ENCODE measurements at regions of chr5 and their contacts with region 1.

Region 1: DNA sequence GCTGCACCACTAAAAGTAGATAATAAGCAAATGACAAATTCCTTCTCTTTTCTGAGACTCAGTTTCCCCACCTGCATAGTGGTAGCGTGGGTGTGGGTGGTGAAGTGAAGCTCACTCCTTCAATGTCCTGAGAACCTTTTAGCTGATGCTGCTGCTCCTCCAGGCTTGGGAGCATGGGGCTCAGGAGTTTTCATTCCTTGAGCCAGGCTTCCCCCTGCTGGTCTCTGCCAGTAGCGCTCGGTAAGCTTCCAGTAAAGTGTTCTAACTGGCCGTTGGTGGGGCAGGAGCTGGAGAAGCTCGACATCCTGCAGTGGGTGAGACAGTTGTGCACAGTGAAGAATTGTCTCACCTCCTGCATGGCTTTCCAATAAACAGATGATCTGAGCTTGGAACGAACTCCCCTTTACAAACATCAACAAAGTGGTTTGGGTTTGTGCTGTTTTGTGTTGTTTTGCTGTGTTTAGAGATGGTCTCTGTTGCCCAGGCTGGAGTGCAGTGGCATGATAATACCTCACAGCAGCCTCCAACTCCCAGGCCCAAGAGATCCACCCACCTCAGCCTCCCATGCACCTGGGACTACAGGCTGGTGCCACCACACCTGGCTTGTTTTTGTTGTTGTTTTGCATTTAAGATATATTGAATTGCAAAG is 34.6 kb downstream of the SPARC start:
- DNase-seq: peak; percentile 64
- ATAC-seq: peak; percentile 99
- H3K4me3 ChIP-seq: no peak overlapping the region
- H3K27ac ChIP-seq: no peak overlapping the region
- H3K4me1 ChIP-seq: no peaks in the 10 kb centered on the region; a peak in 1 of 4 replicates
- H3K27me3 ChIP-seq: no peaks in the 10 kb centered on the region
- CTCF ChIP-seq: peak; percentile 89 to 94 (median 93)
- POLR2A ChIP-seq: no peak
- RAD21 ChIP-seq: peak; percentile 98

Region 2: GRCh38 chr5:151126199-151126645 is 525.9 kb before region 1 on chr5:
- CTCF ChIA-PET with region 1: interaction called, 21 read pairs
- POLR2A ChIA-PET with region 1: no interaction called
- RAD21 ChIA-PET with region 1: interaction called in 1 of 2 experiments, 4 read pairs
- intact Hi-C with region 1: loop called (anchors 2 kb)
- DNase-seq: peak; percentile 38
- ATAC-seq: peak; percentile 88
- H3K4me3 ChIP-seq: no peak overlapping the region
- H3K27ac ChIP-seq: no peak overlapping the region
- H3K4me1 ChIP-seq: peaks cover 0 to 18% of the 10 kb centered on the region in 2 experiments; a peak in 2 of 4 replicates
- H3K27me3 ChIP-seq: no peaks in the 10 kb centered on the region
- CTCF ChIP-seq: peak; percentile 72 to 90 (median 84)
- POLR2A ChIP-seq: no peak
- RAD21 ChIP-seq: peak; percentile 88

Region 3: DNA sequence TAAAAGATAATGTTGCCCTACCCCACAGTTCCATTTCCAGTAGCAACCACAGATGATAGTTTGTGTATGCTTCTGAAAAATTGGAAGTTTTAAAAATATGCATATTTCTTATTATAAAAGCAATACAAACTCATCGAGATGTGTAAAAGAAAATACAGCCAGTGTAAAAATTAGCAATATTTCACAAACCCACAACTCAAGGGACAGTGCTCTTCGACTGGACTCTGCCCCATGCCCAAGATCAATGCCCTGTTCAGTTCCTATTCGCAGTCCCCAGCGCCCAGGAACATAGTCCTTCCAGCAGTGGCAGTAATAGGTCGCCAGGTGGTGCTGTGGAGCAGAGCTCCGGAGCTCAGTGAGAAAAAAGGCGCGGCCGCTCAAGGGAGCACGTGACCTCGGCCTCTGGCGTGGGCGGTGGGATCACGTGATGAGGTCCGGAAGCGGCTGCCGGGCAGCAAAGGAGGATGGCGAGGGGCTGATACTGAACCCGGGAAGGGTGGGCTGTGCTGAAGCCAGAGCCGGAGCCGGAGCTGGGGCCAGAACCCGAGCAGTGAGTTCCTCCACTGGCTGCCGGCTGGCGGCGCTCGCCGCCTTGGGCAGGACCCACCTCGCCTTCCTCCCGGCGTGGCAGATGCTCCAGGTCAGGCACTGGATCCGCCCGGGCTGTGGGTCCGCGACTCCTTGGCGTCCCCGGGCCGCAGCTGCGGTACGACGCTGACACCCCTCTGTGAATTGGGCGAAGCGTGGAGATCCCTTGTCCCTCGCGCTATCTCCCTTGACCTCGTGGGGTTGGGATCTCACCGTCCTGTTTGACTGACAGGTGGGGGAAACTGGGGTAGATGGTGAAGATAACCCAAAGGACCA is 204.7 kb before region 1 on chr5 and contains the start of gene SLC36A1:
- CTCF ChIA-PET with region 1: interaction called, 42 read pairs
- POLR2A ChIA-PET with region 1: interaction called, 4 read pairs
- RAD21 ChIA-PET with region 1: interaction called, 6 read pairs
- intact Hi-C with region 1: loop called (anchors 1 kb)
- DNase-seq: peak; percentile 80
- ATAC-seq: peak; percentile 92
- H3K4me3 ChIP-seq: peak within 1 kb of the TSS; percentile 73 to 77
- H3K27ac ChIP-seq: peak within 1 kb of the TSS; percentile 40
- H3K4me1 ChIP-seq: peaks cover 5 to 24% of the 10 kb centered on the region in 2 experiments; a peak in 3 of 4 replicates
- H3K27me3 ChIP-seq: no peaks in the 10 kb centered on the region
- CTCF ChIP-seq: peak; percentile 92 to 96 (median 94)
- POLR2A ChIP-seq: peak; percentile 59
- RAD21 ChIP-seq: peak; percentile 90
- total RNA-seq, gene SLC36A1: 7.4 TPM

Region 4: GRCh38 chr5:151523335-151523734 is 128.8 kb before region 1 on chr5:
- CTCF ChIA-PET with region 1: interaction called, 37 read pairs
- POLR2A ChIA-PET with region 1: no interaction called
- RAD21 ChIA-PET with region 1: interaction called, 8 to 15 read pairs
- intact Hi-C with region 1: loop called (anchors 1 kb)
- DNase-seq: peak; percentile 39
- ATAC-seq: peak; percentile 98
- H3K4me3 ChIP-seq: no peak overlapping the region
- H3K27ac ChIP-seq: no peak overlapping the region
- H3K4me1 ChIP-seq: no peaks in the 10 kb centered on the region
- H3K27me3 ChIP-seq: no peaks in the 10 kb centered on the region
- CTCF ChIP-seq: peak; percentile 78 to 81 (median 81)
- POLR2A ChIP-seq: no peak
- RAD21 ChIP-seq: peak; percentile 89

Region 5: GRCh38 chr5:152349683-152350526 is 697.8 kb after region 1 on chr5:
- CTCF ChIA-PET with region 1: no interaction called
- POLR2A ChIA-PET with region 1: no interaction called
- RAD21 ChIA-PET with region 1: no interaction called
- intact Hi-C with region 1: loop called (anchors 5 kb)
- DNase-seq: peak; percentile 15
- ATAC-seq: peak; percentile 82
- H3K4me3 ChIP-seq: no peak overlapping the region
- H3K27ac ChIP-seq: no peak overlapping the region
- H3K4me1 ChIP-seq: no peaks in the 10 kb centered on the region
- H3K27me3 ChIP-seq: no peaks in the 10 kb centered on the region
- CTCF ChIP-seq: peak; percentile 25 to 90 (median 89); a peak in 5 of 6 replicates
- POLR2A ChIP-seq: no peak
- RAD21 ChIP-seq: peak; percentile 64

Measured in HCT116 (cell line).